ENCODE measurements at regions of chr20 and their contacts with region 1.

Region 1: GRCh38 chr20:49799698-49800097 is 12.9 kb upstream of the SLC9A8 start:
- DNase-seq: no peak
- ATAC-seq: no peak
- H3K4me3 Mint-ChIP-seq: no peak overlapping the region
- H3K27ac Mint-ChIP-seq: no peak overlapping the region
- H3K4me1 Mint-ChIP-seq: peaks cover 68% of the 10 kb centered on the region
- H3K27me3 Mint-ChIP-seq: no peaks in the 10 kb centered on the region
- CTCF ChIP-seq: no peak

Region 2: DNA sequence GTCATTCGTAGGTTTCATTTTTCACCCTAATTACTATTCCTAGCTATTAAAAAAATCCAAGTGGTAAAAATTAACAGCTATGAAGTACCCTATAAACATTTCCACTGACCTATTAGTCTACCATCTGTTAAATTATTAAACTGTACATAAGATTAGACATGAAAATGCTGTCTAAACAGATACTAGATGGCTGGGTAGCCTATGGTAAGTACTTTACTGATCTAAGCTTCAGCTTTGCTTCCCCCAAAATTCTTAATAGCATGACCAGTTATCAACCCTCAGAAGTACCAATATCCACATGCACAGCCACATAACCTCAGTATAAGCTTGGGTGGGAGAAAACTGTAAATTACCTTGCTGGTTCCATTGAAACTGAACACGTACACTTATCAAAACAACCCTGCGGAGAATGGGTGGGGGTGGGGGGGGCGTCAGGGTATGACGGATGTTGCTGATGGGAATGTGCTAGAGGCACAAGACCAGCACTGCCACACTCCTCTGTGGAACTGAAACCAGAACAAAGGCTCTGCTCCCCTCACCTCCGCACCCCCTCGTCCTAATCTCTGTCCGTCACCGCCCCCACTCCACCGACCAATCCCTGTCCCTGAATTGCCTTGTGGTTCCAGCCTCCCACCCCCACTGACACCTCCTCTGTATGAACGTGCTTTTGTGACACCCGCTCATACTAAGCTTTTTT is 131.4 kb before region 1 on chr20:
- CTCF ChIA-PET with region 1: interaction called, 3 read pairs
- POLR2A ChIA-PET with region 1: interaction called, 16 read pairs
- intact Hi-C with region 1: loop called (anchors 2 kb)
- DNase-seq: peak; percentile 43
- ATAC-seq: peak; percentile 84
- H3K4me3 Mint-ChIP-seq: peak overlapping the region; percentile 68
- H3K27ac Mint-ChIP-seq: peak overlapping the region; percentile 66
- H3K4me1 Mint-ChIP-seq: peaks cover 65% of the 10 kb centered on the region
- H3K27me3 Mint-ChIP-seq: no peaks in the 10 kb centered on the region
- CTCF ChIP-seq: no peak

Region 3: GRCh38 chr20:49758781-49759180 is 40.9 kb before region 1 on chr20:
- CTCF ChIA-PET with region 1: no interaction called
- POLR2A ChIA-PET with region 1: no interaction called
- intact Hi-C with region 1: no loop called
- DNase-seq: no peak
- ATAC-seq: no peak
- H3K4me3 Mint-ChIP-seq: no peak overlapping the region
- H3K27ac Mint-ChIP-seq: no peak overlapping the region
- H3K4me1 Mint-ChIP-seq: no peaks in the 10 kb centered on the region
- H3K27me3 Mint-ChIP-seq: no peaks in the 10 kb centered on the region
- CTCF ChIP-seq: no peak

Region 4: GRCh38 chr20:49859846-49860245 is 60.1 kb after region 1 on chr20:
- CTCF ChIA-PET with region 1: no interaction called
- POLR2A ChIA-PET with region 1: no interaction called
- intact Hi-C with region 1: no loop called
- DNase-seq: no peak
- ATAC-seq: no peak
- H3K4me3 Mint-ChIP-seq: no peak overlapping the region
- H3K27ac Mint-ChIP-seq: no peak overlapping the region
- H3K4me1 Mint-ChIP-seq: no peaks in the 10 kb centered on the region
- H3K27me3 Mint-ChIP-seq: no peaks in the 10 kb centered on the region
- CTCF ChIP-seq: no peak